Mammary epithelial cell (primary cell): ENCODE measurements at regions of chr13 and their contacts with region 1.

Region 1: GRCh38 chr13:36275190-36276002 is 22.2 kb downstream of the CCDC169 start:
- DNase-seq: no peak
- H3K4me3 ChIP-seq: no peak overlapping the region
- H3K27ac ChIP-seq: no peak overlapping the region
- H3K4me1 ChIP-seq: no peaks in the 10 kb centered on the region
- H3K27me3 ChIP-seq: no peaks in the 10 kb centered on the region
- CTCF ChIP-seq: peak; percentile 54 to 63

Region 2: GRCh38 chr13:36130552-36131221 is 144.7 kb before region 1 on chr13:
- CTCF ChIA-PET with region 1: no interaction called
- dilution Hi-C with region 1: no loop called
- in situ Hi-C with region 1: no loop called
- intact Hi-C with region 1: loop called (anchors 1 kb)
- DNase-seq: no peak
- H3K4me3 ChIP-seq: peak overlapping the region; percentile 41 to 52 (median 45)
- H3K27ac ChIP-seq: no peak overlapping the region
- H3K4me1 ChIP-seq: peaks cover 10% of the 10 kb centered on the region
- H3K27me3 ChIP-seq: peaks cover 24% of the 10 kb centered on the region
- CTCF ChIP-seq: no peak

Region 3: DNA sequence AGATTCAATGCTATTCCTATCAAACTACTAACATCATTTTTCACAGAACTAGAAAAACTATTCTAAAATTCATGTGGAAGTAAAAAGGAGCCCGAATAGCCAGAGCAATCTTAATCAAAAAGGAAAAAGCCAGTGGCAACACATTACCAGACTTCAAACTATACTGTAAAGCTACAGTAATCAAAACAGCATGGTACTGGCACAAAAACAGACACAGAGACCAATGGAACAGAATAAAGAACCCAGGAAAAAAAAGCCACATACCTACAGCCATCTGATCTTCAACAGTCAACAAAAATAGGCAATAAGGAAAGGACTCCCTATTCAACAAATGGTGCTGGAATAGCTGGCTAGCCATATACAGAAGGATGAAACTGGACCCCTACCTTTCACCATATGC is 50.7 kb before region 1 on chr13:
- CTCF ChIA-PET with region 1: no interaction called
- dilution Hi-C with region 1: no loop called
- in situ Hi-C with region 1: no loop called
- intact Hi-C with region 1: no loop called
- DNase-seq: no peak
- H3K4me3 ChIP-seq: no peak overlapping the region
- H3K27ac ChIP-seq: no peak overlapping the region
- H3K4me1 ChIP-seq: no peaks in the 10 kb centered on the region
- H3K27me3 ChIP-seq: no peaks in the 10 kb centered on the region
- CTCF ChIP-seq: no peak

Region 4: GRCh38 chr13:36242761-36243160 is 32.6 kb before region 1 on chr13:
- CTCF ChIA-PET with region 1: no interaction called
- dilution Hi-C with region 1: no loop called
- in situ Hi-C with region 1: no loop called
- intact Hi-C with region 1: no loop called
- DNase-seq: peak; percentile 2
- H3K4me3 ChIP-seq: no peak overlapping the region
- H3K27ac ChIP-seq: no peak overlapping the region
- H3K4me1 ChIP-seq: no peaks in the 10 kb centered on the region
- H3K27me3 ChIP-seq: no peaks in the 10 kb centered on the region
- CTCF ChIP-seq: no peak